GM12878 (cell line): ENCODE measurements at regions of chr19 and their contacts with region 1.

Region 1: GRCh38 chr19:12672744-12673143 is 6.1 kb downstream of the WDR83 start:
- DNase-seq: no peak
- ATAC-seq: no peak
- H3K4me3 ChIP-seq: no peak overlapping the region
- H3K27ac ChIP-seq: no peak overlapping the region
- H3K4me1 ChIP-seq: peaks cover 13% of the 10 kb centered on the region
- H3K27me3 ChIP-seq: no peaks in the 10 kb centered on the region
- CTCF ChIP-seq: no peak
- EP300 ChIP-seq: no peak
- POLR2A ChIP-seq: no peak; the same call in 1 of the 2 replicates
- RAD21 ChIP-seq: no peak

Region 2: DNA sequence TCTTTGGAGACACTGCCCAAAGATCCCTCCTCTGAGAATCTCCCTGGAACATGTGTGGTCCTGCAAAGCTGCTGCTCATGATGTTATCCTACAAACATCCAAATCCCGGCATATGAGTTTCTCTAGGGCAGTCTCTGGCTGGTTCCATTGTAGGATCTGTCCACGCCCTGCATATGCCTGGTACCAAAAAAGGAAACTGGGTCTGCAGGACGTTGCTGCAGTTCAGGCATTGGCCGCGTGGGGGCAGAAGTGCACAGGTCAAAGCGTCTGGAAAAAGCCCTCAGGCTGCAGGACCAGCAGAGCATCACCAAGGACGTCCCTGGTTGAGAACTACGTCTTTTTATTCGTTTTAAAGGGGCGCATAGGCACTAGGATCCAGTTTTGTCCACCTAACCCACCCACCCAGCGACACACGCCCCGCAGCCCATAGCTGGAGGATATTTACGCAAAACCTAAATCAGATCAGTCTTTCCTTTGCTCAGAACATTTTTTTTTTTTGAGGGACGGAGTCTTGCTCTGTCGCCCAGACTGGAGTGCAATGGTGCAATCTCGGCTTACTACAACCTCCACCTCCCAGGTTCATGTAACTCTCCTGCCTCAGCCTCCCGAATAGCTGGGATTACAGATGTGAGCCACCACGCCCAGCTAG is 108.6 kb before region 1 on chr19:
- CTCF ChIA-PET with region 1: interaction called, 16 read pairs
- POLR2A ChIA-PET with region 1: no interaction called
- RAD21 ChIA-PET with region 1: interaction called, 9 read pairs
- SMC1A ChIA-PET with region 1: interaction called, 10 read pairs
- in situ Hi-C with region 1: loop called (anchors 5 kb)
- intact Hi-C with region 1: loop called (anchors 1 kb)
- DNase-seq: peak; percentile 65
- ATAC-seq: peak; percentile 95
- H3K4me3 ChIP-seq: no peak overlapping the region
- H3K27ac ChIP-seq: no peak overlapping the region
- H3K4me1 ChIP-seq: no peaks in the 10 kb centered on the region
- H3K27me3 ChIP-seq: no peaks in the 10 kb centered on the region
- CTCF ChIP-seq: peak; percentile 98 to 99 (median 99)
- EP300 ChIP-seq: no peak
- POLR2A ChIP-seq: no peak
- RAD21 ChIP-seq: peak; percentile 99

Region 3: GRCh38 chr19:12574036-12574435 is 98.7 kb before region 1 on chr19:
- CTCF ChIA-PET with region 1: interaction called, 11 read pairs
- POLR2A ChIA-PET with region 1: no interaction called
- RAD21 ChIA-PET with region 1: no interaction called
- SMC1A ChIA-PET with region 1: interaction called, 4 read pairs
- in situ Hi-C with region 1: no loop called
- intact Hi-C with region 1: no loop called
- DNase-seq: peak; percentile 71
- ATAC-seq: peak; percentile 89
- H3K4me3 ChIP-seq: no peak overlapping the region
- H3K27ac ChIP-seq: peak overlapping the region; percentile 7; the same call in 1 of the 2 replicates
- H3K4me1 ChIP-seq: peaks cover 6% of the 10 kb centered on the region
- H3K27me3 ChIP-seq: no peaks in the 10 kb centered on the region
- CTCF ChIP-seq: no peak
- EP300 ChIP-seq: 0 out of 4 replicates have a peak, but pooled peaks of 1 of the 2 experiments have one; percentile 16
- POLR2A ChIP-seq: no peak
- RAD21 ChIP-seq: no peak

Region 4: DNA sequence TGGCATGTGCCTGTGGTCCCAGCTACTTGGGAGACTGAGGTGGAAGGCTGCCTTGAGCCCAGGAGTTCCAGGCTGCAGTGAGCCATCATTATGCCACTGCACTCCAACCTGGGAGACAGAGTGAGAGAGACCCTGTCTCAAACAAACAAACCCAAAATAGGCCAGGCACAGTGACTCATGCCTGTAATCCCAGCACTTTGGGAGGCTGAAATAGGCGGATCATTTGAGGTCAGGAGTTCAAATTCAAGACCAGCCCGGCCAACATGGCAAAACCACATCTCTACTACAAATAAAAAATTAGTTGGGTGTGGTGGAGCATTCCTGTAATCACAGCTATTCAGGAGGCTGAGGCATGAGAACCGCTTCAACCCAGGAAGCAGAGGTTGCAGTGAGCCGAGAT is 470.4 kb after region 1 on chr19:
- CTCF ChIA-PET with region 1: no interaction called
- POLR2A ChIA-PET with region 1: no interaction called
- RAD21 ChIA-PET with region 1: no interaction called
- SMC1A ChIA-PET with region 1: no interaction called
- in situ Hi-C with region 1: no loop called
- intact Hi-C with region 1: no loop called
- DNase-seq: no peak
- ATAC-seq: no peak
- H3K4me3 ChIP-seq: no peak overlapping the region
- H3K27ac ChIP-seq: no peak overlapping the region
- H3K4me1 ChIP-seq: no peaks in the 10 kb centered on the region
- H3K27me3 ChIP-seq: no peaks in the 10 kb centered on the region
- CTCF ChIP-seq: no peak
- EP300 ChIP-seq: no peak
- POLR2A ChIP-seq: no peak
- RAD21 ChIP-seq: no peak